ENCODE measurements at regions of chr1 and their contacts with region 1.

Region 1: GRCh38 chr1:19504796-19505692 is 19.7 kb upstream of the CAPZB start:
- DNase-seq: peak; percentile 86
- H3K4me3 ChIP-seq: no peak overlapping the region
- H3K27ac ChIP-seq: peak overlapping the region; percentile 61
- H3K4me1 ChIP-seq: peaks cover 26% of the 10 kb centered on the region
- H3K27me3 ChIP-seq: no peaks in the 10 kb centered on the region
- CTCF ChIP-seq: no peak
- POLR2A ChIP-seq: peak; percentile 33

Region 2: GRCh38 chr1:19477284-19478249 is 27.5 kb before region 1 on chr1:
- CTCF ChIA-PET with region 1: no interaction called
- POLR2A ChIA-PET with region 1: no interaction called
- dilution Hi-C with region 1: no loop called
- intact Hi-C with region 1: loop called (anchors 2 kb)
- DNase-seq: peak; percentile 43
- H3K4me3 ChIP-seq: no peak overlapping the region
- H3K27ac ChIP-seq: peak overlapping the region; percentile 58
- H3K4me1 ChIP-seq: peaks cover 50% of the 10 kb centered on the region
- H3K27me3 ChIP-seq: no peaks in the 10 kb centered on the region
- CTCF ChIP-seq: no peak
- POLR2A ChIP-seq: no peak

Region 3: DNA sequence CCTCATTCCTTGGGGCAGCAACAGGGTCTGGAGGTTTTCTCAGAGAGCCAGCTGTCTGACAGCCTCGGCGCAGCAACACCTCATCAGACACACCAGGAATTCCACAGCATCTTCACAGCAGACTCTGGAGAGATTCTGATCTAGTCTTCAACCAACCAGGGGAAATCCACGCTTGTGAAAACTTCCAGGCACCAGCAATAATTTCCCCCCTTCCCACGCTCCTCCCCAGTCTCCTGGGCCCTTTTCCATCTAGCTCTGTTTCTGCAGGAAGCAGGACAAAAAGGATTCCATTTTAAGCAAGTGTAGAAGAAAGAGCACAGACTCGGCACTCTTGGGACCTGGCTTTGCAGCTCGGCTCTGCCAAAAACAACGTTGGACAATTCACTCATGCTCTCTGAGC is 24.6 kb after region 1 on chr1:
- CTCF ChIA-PET with region 1: no interaction called
- POLR2A ChIA-PET with region 1: no interaction called
- dilution Hi-C with region 1: no loop called
- intact Hi-C with region 1: no loop called
- DNase-seq: no peak
- H3K4me3 ChIP-seq: no peak overlapping the region
- H3K27ac ChIP-seq: no peak overlapping the region
- H3K4me1 ChIP-seq: no peaks in the 10 kb centered on the region
- H3K27me3 ChIP-seq: no peaks in the 10 kb centered on the region
- CTCF ChIP-seq: no peak
- POLR2A ChIP-seq: no peak

Region 4: GRCh38 chr1:20137043-20137442 is 632.0 kb after region 1 on chr1:
- CTCF ChIA-PET with region 1: no interaction called
- POLR2A ChIA-PET with region 1: no interaction called
- dilution Hi-C with region 1: no loop called
- intact Hi-C with region 1: no loop called
- DNase-seq: no peak
- H3K4me3 ChIP-seq: no peak overlapping the region
- H3K27ac ChIP-seq: no peak overlapping the region
- H3K4me1 ChIP-seq: no peaks in the 10 kb centered on the region
- H3K27me3 ChIP-seq: no peaks in the 10 kb centered on the region
- CTCF ChIP-seq: no peak
- POLR2A ChIP-seq: no peak

Measured in endothelial cell of umbilical vein (primary cell).